ENCODE measurements at regions of chr3 and their contacts with region 1.

Region 1: DNA sequence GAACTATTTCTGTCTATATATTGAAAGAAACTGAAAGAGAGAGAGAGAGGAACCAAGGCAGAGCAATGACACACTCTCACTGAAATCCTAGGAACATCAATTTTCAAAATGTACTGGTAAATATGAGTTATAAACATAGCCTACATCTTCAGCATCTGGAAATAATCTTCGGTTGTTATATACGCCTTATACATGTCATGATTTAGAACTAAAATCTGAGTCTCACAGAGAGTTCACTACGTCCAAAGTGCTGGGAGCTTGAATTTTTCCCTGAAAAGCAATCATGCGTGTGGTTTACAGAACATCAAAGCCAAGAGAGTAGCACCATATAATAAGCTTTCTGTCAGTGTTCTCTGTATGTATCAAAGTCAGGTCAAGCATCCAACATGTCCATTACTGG is 420.0 kb upstream of the CBLB start:
- DNase-seq: no peak
- ATAC-seq: no peak
- H3K4me3 ChIP-seq: no peak overlapping the region
- H3K4me3 Mint-ChIP-seq: no peak overlapping the region
- H3K27ac ChIP-seq: no peak overlapping the region
- H3K27ac Mint-ChIP-seq: no peak overlapping the region
- H3K4me1 ChIP-seq: peaks cover 0 to 5% of the 10 kb centered on the region in 2 donors
- H3K4me1 Mint-ChIP-seq: peaks cover 0 to 21% (median 13%) of the 10 kb centered on the region in 7 donors
- H3K27me3 ChIP-seq: no peaks in the 10 kb centered on the region
- H3K27me3 Mint-ChIP-seq: no peaks in the 10 kb centered on the region

Region 2: GRCh38 chr3:106247902-106248684 is 40.7 kb before region 1 on chr3:
- CTCF ChIA-PET with region 1: no interaction called
- POLR2A ChIA-PET with region 1: no interaction called
- intact Hi-C with region 1: loop called in 1 of 2 experiments (anchors 5 kb)
- DNase-seq: no peak
- ATAC-seq: no peak
- H3K4me3 ChIP-seq: no peak overlapping the region
- H3K4me3 Mint-ChIP-seq: peak overlapping the region in 1 of 10 donors; percentile 23
- H3K27ac ChIP-seq: no peak overlapping the region
- H3K27ac Mint-ChIP-seq: peak overlapping the region in 1 of 9 donors; percentile 60
- H3K4me1 ChIP-seq: no peaks in the 10 kb centered on the region
- H3K4me1 Mint-ChIP-seq: peaks cover 0 to 27% (median 0%) of the 10 kb centered on the region in 7 donors
- H3K27me3 ChIP-seq: no peaks in the 10 kb centered on the region
- H3K27me3 Mint-ChIP-seq: no peaks in the 10 kb centered on the region